ENCODE measurements at regions of chrX and their contacts with region 1.

Region 1: DNA sequence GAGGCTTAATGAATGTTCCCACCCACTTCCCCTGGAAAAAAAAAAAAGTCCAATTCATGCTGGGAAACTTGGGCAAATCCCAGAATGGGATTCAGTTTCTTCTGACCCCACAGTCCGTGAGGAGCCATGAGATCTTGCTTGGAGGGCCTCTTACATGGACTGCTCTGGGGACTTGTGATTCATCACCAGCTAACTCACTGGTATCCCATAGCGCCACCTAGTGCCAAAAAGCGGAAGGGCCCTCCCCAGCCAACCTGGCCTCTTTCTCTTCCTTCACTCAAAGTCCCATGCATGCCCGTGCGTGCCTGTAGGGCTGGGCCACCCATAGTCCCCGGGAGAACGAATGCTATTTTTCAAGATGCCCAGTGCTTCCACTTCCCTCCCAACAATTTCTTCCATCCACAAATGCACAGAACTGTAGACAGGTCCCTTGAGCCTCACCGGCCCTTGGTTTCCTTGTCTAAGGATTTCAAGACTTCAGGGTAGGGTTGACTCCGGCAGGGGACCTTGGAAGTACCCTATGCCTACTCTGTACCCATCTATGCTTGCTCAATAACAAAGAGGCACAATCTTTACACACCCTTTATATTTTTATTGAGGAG is 5.1 kb downstream of the RTL5 start:
- DNase-seq: peak; percentile 69 to 89 (median 80)
- ATAC-seq: peak; percentile 79
- H3K4me3 ChIP-seq: no peak overlapping the region
- H3K4me3 Mint-ChIP-seq: no peak overlapping the region
- H3K27ac ChIP-seq: no peak overlapping the region
- H3K27ac Mint-ChIP-seq: peak overlapping the region; percentile 9
- H3K4me1 ChIP-seq: peaks cover 58% of the 10 kb centered on the region
- H3K4me1 Mint-ChIP-seq: peaks cover 33% of the 10 kb centered on the region
- H3K27me3 ChIP-seq: peaks cover 0 to 3% of the 10 kb centered on the region in 2 experiments
- H3K27me3 Mint-ChIP-seq: peaks cover 18% of the 10 kb centered on the region
- CTCF ChIP-seq: peak; percentile 72

Region 2: GRCh38 chrX:71998836-71999509 is 127.7 kb before region 1 on chrX:
- CTCF ChIA-PET with region 1: interaction called, 10 read pairs
- POLR2A ChIA-PET with region 1: no interaction called
- intact Hi-C with region 1: loop called (anchors 1 kb)
- DNase-seq: peak in 9 of 14 experiments; percentile 4 to 63 (median 21)
- ATAC-seq: peak; percentile 37
- H3K4me3 ChIP-seq: no peak overlapping the region
- H3K4me3 Mint-ChIP-seq: no peak overlapping the region
- H3K27ac ChIP-seq: no peak overlapping the region
- H3K27ac Mint-ChIP-seq: no peak overlapping the region
- H3K4me1 ChIP-seq: peaks cover 4% of the 10 kb centered on the region
- H3K4me1 Mint-ChIP-seq: no peaks in the 10 kb centered on the region
- H3K27me3 ChIP-seq: no peaks in the 10 kb centered on the region
- H3K27me3 Mint-ChIP-seq: no peaks in the 10 kb centered on the region
- CTCF ChIP-seq: peak; percentile 71

Region 3: DNA sequence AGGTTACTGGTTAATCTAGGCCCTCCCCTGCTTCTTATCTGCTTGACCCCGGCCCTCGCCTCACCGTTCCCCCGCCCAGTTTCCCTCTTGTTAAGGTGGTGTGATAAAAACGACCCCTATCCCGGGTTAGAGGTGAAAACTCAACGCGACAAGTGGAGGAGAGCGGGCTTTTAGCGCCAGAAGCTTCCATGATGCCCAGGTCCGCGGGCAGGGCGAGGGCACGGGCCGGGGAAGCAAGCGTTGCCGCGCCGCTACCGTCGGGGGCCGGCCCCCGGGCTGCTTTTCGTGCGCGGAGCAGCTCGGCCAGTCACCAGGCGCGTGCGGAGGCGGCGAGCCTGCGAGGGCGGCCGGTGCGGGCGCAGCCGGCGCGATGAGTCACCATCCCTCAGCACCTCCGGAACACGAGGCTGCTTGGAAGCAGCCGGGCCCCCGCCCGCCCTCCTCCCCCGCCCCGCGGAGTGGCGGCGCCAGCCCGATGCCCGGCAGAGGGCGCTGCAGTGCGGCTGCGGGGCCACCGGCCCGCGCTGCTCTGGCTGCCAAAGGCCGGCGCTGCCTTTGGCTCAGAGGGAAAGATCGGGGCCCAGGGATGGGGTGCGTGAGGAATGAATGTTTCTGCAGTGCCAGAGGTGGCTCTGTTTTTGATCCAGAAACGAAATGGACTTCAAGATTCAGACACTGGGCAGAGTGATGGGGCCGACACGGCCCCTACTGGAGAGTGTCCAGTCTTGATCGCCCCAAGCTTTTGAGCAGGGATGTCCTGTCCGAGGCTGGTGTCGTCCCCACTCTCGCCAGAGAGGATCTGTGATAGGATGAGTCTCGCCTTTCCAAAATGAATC is 108.1 kb before region 1 on chrX:
- CTCF ChIA-PET with region 1: interaction called, 18 read pairs
- POLR2A ChIA-PET with region 1: interaction called, 6 read pairs
- intact Hi-C with region 1: loop called (anchors 1 kb)
- DNase-seq: peak; percentile 60 to 92 (median 76)
- ATAC-seq: peak; percentile 97
- H3K4me3 ChIP-seq: peak overlapping the region; percentile 10
- H3K4me3 Mint-ChIP-seq: no peak overlapping the region
- H3K27ac ChIP-seq: no peak overlapping the region
- H3K27ac Mint-ChIP-seq: no peak overlapping the region
- H3K4me1 ChIP-seq: peaks cover 25% of the 10 kb centered on the region
- H3K4me1 Mint-ChIP-seq: peaks cover 12% of the 10 kb centered on the region
- H3K27me3 ChIP-seq: no peaks in the 10 kb centered on the region
- H3K27me3 Mint-ChIP-seq: peaks cover 15% of the 10 kb centered on the region
- CTCF ChIP-seq: peak; percentile 65

Region 4: GRCh38 chrX:72100824-72101351 is 25.8 kb before region 1 on chrX:
- CTCF ChIA-PET with region 1: interaction called, 5 read pairs
- POLR2A ChIA-PET with region 1: interaction called, 4 read pairs
- intact Hi-C with region 1: loop called (anchors 1 to 2 kb)
- DNase-seq: peak; percentile 42 to 93 (median 56)
- ATAC-seq: peak; percentile 61
- H3K4me3 ChIP-seq: peak overlapping the region; percentile 61
- H3K4me3 Mint-ChIP-seq: peak overlapping the region; percentile 82
- H3K27ac ChIP-seq: peak overlapping the region in 1 of 2 donors; percentile 82
- H3K27ac Mint-ChIP-seq: peak overlapping the region; percentile 89
- H3K4me1 ChIP-seq: peaks cover 67% of the 10 kb centered on the region
- H3K4me1 Mint-ChIP-seq: peaks cover 46% of the 10 kb centered on the region
- H3K27me3 ChIP-seq: peaks cover 0 to 2% of the 10 kb centered on the region in 2 experiments
- H3K27me3 Mint-ChIP-seq: peaks cover 19% of the 10 kb centered on the region
- CTCF ChIP-seq: no peak

Region 5: DNA sequence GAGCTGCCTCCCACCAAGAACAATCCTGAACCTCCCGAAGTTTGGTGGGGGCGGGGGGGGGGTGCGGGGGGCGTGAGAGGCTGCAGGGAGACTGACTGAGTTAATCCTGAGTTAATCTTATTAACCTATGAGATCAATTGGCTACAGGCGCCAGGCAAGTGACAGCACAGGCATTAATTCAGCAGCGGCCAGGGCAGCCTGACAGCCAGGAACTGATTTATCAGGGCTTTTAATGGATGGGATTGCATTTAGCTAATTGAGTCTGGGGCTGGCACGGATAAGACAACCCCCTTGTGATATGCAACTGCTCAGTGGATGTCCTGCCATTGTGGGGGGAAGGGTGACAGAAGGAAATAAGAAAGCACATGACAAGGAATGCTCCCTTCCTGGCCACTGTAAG is 11.3 kb before region 1 on chrX:
- CTCF ChIA-PET with region 1: interaction called, 11 read pairs
- POLR2A ChIA-PET with region 1: no interaction called
- intact Hi-C with region 1: no loop called
- DNase-seq: no peak
- ATAC-seq: no peak
- H3K4me3 ChIP-seq: no peak overlapping the region
- H3K4me3 Mint-ChIP-seq: no peak overlapping the region
- H3K27ac ChIP-seq: no peak overlapping the region
- H3K27ac Mint-ChIP-seq: no peak overlapping the region
- H3K4me1 ChIP-seq: peaks cover 33% of the 10 kb centered on the region
- H3K4me1 Mint-ChIP-seq: no peaks in the 10 kb centered on the region
- H3K27me3 ChIP-seq: no peaks in the 10 kb centered on the region
- H3K27me3 Mint-ChIP-seq: no peaks in the 10 kb centered on the region
- CTCF ChIP-seq: no peak

Measured in CD4-positive, alpha-beta T cell (primary cell).